GM12878 (cell line): ENCODE measurements at regions of chr7 and their contacts with region 1.

Region 1: DNA sequence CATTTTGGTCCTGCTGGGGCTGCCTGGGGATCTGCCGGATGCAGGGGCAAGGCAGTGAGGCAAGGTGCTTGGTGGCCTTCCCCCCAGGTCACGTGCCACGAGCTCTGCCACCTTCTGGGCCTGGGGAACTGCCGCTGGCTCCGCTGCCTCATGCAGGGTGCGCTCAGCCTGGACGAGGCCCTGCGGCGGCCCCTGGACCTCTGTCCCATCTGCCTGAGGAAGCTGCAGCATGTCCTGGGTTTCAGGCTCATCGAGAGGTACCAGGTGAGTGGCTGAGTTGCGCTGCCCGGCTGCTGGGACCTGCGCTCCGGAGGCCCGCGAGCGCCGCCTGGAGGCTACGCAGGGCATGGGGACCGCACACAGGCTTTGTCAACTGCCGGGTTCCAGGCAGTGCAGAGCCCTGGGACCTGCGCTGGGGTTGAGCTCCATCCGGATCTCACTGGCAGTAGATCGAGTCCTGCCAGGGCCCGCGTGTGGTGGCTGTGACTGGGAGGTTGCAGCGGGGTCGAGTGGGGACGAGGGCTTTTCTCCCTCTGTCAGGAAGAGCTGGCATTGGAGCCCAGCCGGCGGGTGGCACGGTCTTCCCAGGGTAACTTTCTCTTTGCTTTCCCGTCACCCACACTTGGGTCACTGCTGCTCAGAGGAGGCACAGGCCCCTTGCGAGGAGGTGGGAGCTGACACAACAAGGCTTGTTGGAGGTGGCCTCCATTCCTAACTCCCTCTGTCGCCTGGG is 21.7 kb downstream of the AMZ1 start:
- DNase-seq: peak; percentile 61
- ATAC-seq: peak; percentile 86
- H3K4me3 ChIP-seq: peak overlapping the region; percentile 56
- H3K27ac ChIP-seq: peak overlapping the region; percentile 89
- H3K4me1 ChIP-seq: peaks cover 28% of the 10 kb centered on the region
- H3K27me3 ChIP-seq: no peaks in the 10 kb centered on the region
- CTCF ChIP-seq: peak; percentile 95 to 100 (median 100); a peak in 5 of 6 replicates
- EP300 ChIP-seq: no peak
- POLR2A ChIP-seq: peak; percentile 68
- RAD21 ChIP-seq: peak; percentile 93

Region 2: GRCh38 chr7:2214636-2215035 is 495.1 kb before region 1 on chr7:
- CTCF ChIA-PET with region 1: no interaction called
- POLR2A ChIA-PET with region 1: no interaction called
- RAD21 ChIA-PET with region 1: no interaction called
- SMC1A ChIA-PET with region 1: no interaction called
- in situ Hi-C with region 1: no loop called
- intact Hi-C with region 1: no loop called
- DNase-seq: no peak
- ATAC-seq: no peak
- H3K4me3 ChIP-seq: no peak overlapping the region
- H3K27ac ChIP-seq: no peak overlapping the region
- H3K4me1 ChIP-seq: peaks cover 5% of the 10 kb centered on the region
- H3K27me3 ChIP-seq: no peaks in the 10 kb centered on the region
- CTCF ChIP-seq: no peak
- EP300 ChIP-seq: no peak
- POLR2A ChIP-seq: no peak
- RAD21 ChIP-seq: no peak

Region 3: DNA sequence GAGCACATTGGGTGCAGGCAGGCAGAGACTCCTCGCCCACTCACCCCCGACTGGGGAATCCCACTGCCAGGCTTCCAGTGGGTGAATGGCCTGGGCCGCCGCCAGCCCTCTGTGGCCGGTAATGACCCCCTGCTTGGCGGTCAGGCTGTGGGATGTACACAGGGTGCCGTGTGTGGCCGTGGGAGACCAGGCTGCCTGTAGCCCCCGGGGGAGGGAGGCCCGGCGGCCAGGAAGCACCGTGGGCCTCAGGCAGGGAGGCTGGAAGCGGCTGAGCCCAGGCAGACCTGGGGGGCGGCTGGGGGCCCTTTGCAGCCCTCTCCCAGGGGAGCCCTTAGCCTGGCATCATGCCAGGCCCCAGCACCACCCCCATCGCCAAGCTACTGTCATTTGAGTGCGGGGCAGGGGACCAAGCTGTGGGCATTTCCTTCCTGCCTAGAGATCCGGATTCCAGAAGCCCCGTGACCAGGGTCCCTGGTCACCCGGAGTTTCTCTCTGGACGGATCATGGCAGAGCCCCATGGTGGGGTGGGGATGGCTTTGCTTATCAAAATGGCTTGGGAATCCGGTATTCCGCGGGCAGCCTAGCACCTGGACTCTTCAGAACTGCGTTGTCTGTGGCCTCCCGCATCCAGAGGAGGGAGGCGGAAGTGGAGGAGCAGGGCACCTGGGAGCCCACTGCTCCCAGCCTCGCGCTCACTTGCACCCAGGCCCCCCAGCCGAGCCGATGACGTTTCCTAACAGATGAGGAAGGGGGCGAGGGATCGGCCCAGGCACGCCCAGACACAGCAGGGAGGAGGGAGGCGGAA is 76.8 kb before region 1 on chr7:
- CTCF ChIA-PET with region 1: interaction called, 9 read pairs
- POLR2A ChIA-PET with region 1: interaction called, 5 read pairs
- RAD21 ChIA-PET with region 1: interaction called, 14 read pairs
- SMC1A ChIA-PET with region 1: interaction called, 5 read pairs
- in situ Hi-C with region 1: no loop called
- intact Hi-C with region 1: loop called (anchors 2 kb)
- DNase-seq: no peak
- ATAC-seq: peak; percentile 57
- H3K4me3 ChIP-seq: peak overlapping the region; percentile 96
- H3K27ac ChIP-seq: peak overlapping the region; percentile 71
- H3K4me1 ChIP-seq: peaks cover 20% of the 10 kb centered on the region
- H3K27me3 ChIP-seq: 0 out of 4 replicates have a peak, but pooled peaks cover 0 to 1% of the 10 kb centered on the region in 2 experiments
- CTCF ChIP-seq: no peak
- EP300 ChIP-seq: no peak
- POLR2A ChIP-seq: no peak; the same call in 1 of the 2 replicates
- RAD21 ChIP-seq: no peak

Region 4: GRCh38 chr7:2688409-2689331 is 21.0 kb before region 1 on chr7:
- CTCF ChIA-PET with region 1: interaction called, 65 read pairs
- POLR2A ChIA-PET with region 1: interaction called, 17 read pairs
- RAD21 ChIA-PET with region 1: interaction called, 31 read pairs
- SMC1A ChIA-PET with region 1: interaction called, 49 read pairs
- in situ Hi-C with region 1: no loop called
- intact Hi-C with region 1: no loop called
- DNase-seq: peak; percentile 62
- ATAC-seq: peak; percentile 84
- H3K4me3 ChIP-seq: peak overlapping the region; percentile 23; the same call in 1 of the 2 replicates
- H3K27ac ChIP-seq: 0 out of 2 replicates have a peak overlapping the region, but pooled peaks have one; percentile 10
- H3K4me1 ChIP-seq: peaks cover 27% of the 10 kb centered on the region
- H3K27me3 ChIP-seq: peaks cover 3 to 7% of the 10 kb centered on the region in 2 experiments; a peak in 3 of 4 replicates
- CTCF ChIP-seq: no peak
- EP300 ChIP-seq: peak; percentile 71 to 87
- POLR2A ChIP-seq: no peak
- RAD21 ChIP-seq: no peak

Region 5: DNA sequence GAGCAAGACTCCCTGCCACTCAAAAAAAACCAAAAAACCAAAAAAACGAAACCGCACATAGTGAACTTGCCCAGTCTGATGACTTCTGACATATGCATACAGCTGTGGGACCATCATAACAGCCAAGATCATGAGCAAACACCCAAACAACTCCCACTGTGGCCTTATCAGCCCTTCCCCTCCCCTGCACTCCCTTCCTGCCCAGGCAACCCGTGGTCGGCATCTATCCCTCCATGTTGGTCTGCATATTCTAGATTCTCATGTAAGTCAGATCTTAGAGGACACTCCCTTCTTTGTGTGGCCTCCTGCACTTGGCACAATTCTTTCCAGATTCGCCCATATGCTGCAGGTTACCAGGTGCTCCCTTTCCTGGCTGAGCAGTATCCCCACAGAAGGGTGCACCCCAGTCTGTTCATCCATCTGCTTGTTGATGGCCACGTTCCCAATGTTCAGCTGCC is 61.6 kb after region 1 on chr7:
- CTCF ChIA-PET with region 1: interaction called, 11 read pairs
- POLR2A ChIA-PET with region 1: interaction called, 3 read pairs
- RAD21 ChIA-PET with region 1: interaction called, 9 read pairs
- SMC1A ChIA-PET with region 1: interaction called, 5 read pairs
- in situ Hi-C with region 1: no loop called
- intact Hi-C with region 1: no loop called
- DNase-seq: no peak
- ATAC-seq: no peak
- H3K4me3 ChIP-seq: no peak overlapping the region
- H3K27ac ChIP-seq: no peak overlapping the region
- H3K4me1 ChIP-seq: peaks cover 10% of the 10 kb centered on the region
- H3K27me3 ChIP-seq: no peaks in the 10 kb centered on the region
- CTCF ChIP-seq: no peak
- EP300 ChIP-seq: no peak
- POLR2A ChIP-seq: no peak
- RAD21 ChIP-seq: no peak

Region 6: GRCh38 chr7:2838873-2839578 is 129.3 kb after region 1 on chr7:
- CTCF ChIA-PET with region 1: interaction called, 16 read pairs
- POLR2A ChIA-PET with region 1: interaction called, 5 read pairs
- RAD21 ChIA-PET with region 1: interaction called, 8 read pairs
- SMC1A ChIA-PET with region 1: interaction called, 11 read pairs
- in situ Hi-C with region 1: no loop called
- intact Hi-C with region 1: loop called (anchors 5 kb)
- DNase-seq: no peak
- ATAC-seq: peak; percentile 85
- H3K4me3 ChIP-seq: peak overlapping the region; percentile 18; the same call in 1 of the 2 replicates
- H3K27ac ChIP-seq: no peak overlapping the region
- H3K4me1 ChIP-seq: peaks cover 30% of the 10 kb centered on the region
- H3K27me3 ChIP-seq: no peaks in the 10 kb centered on the region
- CTCF ChIP-seq: no peak
- EP300 ChIP-seq: peak in 1 of 2 experiments; percentile 30; a peak in 1 of 4 replicates
- POLR2A ChIP-seq: no peak
- RAD21 ChIP-seq: no peak